Caco-2 (cell line): ENCODE measurements at regions of chr19 and their contacts with region 1.

Region 1: GRCh38 chr19:41753936-41754529 is 1.3 kb upstream of the CEACAM6 start:
- DNase-seq: peak; percentile 70 to 71
- H3K4me3 ChIP-seq: no peak overlapping the region
- H3K4me3 Mint-ChIP-seq: no peak overlapping the region
- H3K27ac Mint-ChIP-seq: no peak overlapping the region
- H3K4me1 ChIP-seq: peaks cover 17% of the 10 kb centered on the region
- H3K4me1 Mint-ChIP-seq: peaks cover 20% of the 10 kb centered on the region
- H3K27me3 ChIP-seq: no peaks in the 10 kb centered on the region
- H3K27me3 Mint-ChIP-seq: no peaks in the 10 kb centered on the region
- CTCF ChIP-seq: peak; percentile 72 to 75

Region 2: GRCh38 chr19:41641879-41642485 is 112.1 kb before region 1 on chr19:
- CTCF ChIA-PET with region 1: interaction called, 14 read pairs
- POLR2A ChIA-PET with region 1: no interaction called
- intact Hi-C with region 1: loop called (anchors 5 kb)
- DNase-seq: peak; percentile 64 to 78
- H3K4me3 ChIP-seq: no peak overlapping the region
- H3K4me3 Mint-ChIP-seq: no peak overlapping the region
- H3K27ac Mint-ChIP-seq: no peak overlapping the region
- H3K4me1 ChIP-seq: no peaks in the 10 kb centered on the region
- H3K4me1 Mint-ChIP-seq: no peaks in the 10 kb centered on the region
- H3K27me3 ChIP-seq: no peaks in the 10 kb centered on the region; the same call in 1 of the 2 replicates
- H3K27me3 Mint-ChIP-seq: peaks cover 3% of the 10 kb centered on the region
- CTCF ChIP-seq: peak; percentile 87 to 95

Region 3: GRCh38 chr19:41652250-41652649 is 101.8 kb before region 1 on chr19:
- CTCF ChIA-PET with region 1: no interaction called
- POLR2A ChIA-PET with region 1: no interaction called
- intact Hi-C with region 1: no loop called
- DNase-seq: no peak
- H3K4me3 ChIP-seq: no peak overlapping the region
- H3K4me3 Mint-ChIP-seq: no peak overlapping the region
- H3K27ac Mint-ChIP-seq: no peak overlapping the region
- H3K4me1 ChIP-seq: no peaks in the 10 kb centered on the region
- H3K4me1 Mint-ChIP-seq: peaks cover 6% of the 10 kb centered on the region
- H3K27me3 ChIP-seq: no peaks in the 10 kb centered on the region
- H3K27me3 Mint-ChIP-seq: peaks cover 11% of the 10 kb centered on the region
- CTCF ChIP-seq: no peak

Region 4: DNA sequence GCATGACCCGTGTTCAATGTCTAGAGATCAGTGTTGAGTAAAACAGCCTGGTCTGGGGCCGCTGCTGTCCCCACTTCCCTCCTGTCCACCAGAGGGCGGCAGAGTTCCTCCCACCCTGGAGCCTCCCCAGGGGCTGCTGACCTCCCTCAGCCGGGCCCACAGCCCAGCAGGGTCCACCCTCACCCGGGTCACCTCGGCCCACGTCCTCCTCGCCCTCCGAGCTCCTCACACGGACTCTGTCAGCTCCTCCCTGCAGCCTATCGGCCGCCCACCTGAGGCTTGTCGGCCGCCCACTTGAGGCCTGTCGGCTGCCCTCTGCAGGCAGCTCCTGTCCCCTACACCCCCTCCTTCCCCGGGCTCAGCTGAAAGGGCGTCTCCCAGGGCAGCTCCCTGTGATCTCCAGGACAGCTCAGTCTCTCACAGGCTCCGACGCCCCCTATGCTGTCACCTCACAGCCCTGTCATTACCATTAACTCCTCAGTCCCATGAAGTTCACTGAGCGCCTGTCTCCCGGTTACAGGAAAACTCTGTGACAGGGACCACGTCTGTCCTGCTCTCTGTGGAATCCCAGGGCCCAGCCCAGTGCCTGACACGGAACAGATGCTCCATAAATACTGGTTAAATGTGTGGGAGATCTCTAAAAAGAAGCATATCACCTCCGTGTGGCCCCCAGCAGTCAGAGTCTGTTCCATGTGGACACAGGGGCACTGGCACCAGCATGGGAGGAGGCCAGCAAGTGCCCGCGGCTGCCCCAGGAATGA is 47.1 kb before region 1 on chr19:
- CTCF ChIA-PET with region 1: interaction called, 19 read pairs
- POLR2A ChIA-PET with region 1: no interaction called
- intact Hi-C with region 1: no loop called
- DNase-seq: peak; percentile 84 to 85
- H3K4me3 ChIP-seq: peak overlapping the region; percentile 26
- H3K4me3 Mint-ChIP-seq: peak overlapping the region; percentile 66
- H3K27ac Mint-ChIP-seq: no peak overlapping the region
- H3K4me1 ChIP-seq: no peaks in the 10 kb centered on the region; the same call in 1 of the 2 replicates
- H3K4me1 Mint-ChIP-seq: peaks cover 13% of the 10 kb centered on the region
- H3K27me3 ChIP-seq: no peaks in the 10 kb centered on the region
- H3K27me3 Mint-ChIP-seq: peaks cover 5% of the 10 kb centered on the region
- CTCF ChIP-seq: peak; percentile 85 to 99

Region 5: DNA sequence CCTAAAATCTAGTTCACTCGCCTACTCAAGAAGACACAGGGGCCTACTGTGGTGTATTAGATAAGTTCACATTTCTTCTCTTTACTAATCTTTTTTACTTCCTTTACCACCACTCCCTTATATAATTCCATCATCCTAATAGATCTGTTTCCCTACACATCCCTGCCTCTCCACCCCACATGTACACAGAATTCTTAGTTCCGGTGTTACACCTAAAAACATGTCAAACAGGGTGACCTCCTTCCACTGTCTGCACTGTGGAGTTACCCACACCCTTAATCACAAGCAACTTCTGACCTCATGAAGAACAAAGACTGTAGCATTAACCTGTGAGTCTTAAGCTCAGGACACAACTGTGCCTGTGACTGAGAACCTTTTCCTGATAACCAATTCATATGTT is 26.3 kb before region 1 on chr19:
- CTCF ChIA-PET with region 1: no interaction called
- POLR2A ChIA-PET with region 1: no interaction called
- intact Hi-C with region 1: no loop called
- DNase-seq: no peak
- H3K4me3 ChIP-seq: no peak overlapping the region
- H3K4me3 Mint-ChIP-seq: no peak overlapping the region
- H3K27ac Mint-ChIP-seq: no peak overlapping the region
- H3K4me1 ChIP-seq: no peaks in the 10 kb centered on the region
- H3K4me1 Mint-ChIP-seq: peaks cover 3% of the 10 kb centered on the region
- H3K27me3 ChIP-seq: no peaks in the 10 kb centered on the region; the same call in 1 of the 2 replicates
- H3K27me3 Mint-ChIP-seq: no peaks in the 10 kb centered on the region
- CTCF ChIP-seq: no peak

Region 6: GRCh38 chr19:41775360-41775695 is 21.3 kb after region 1 on chr19:
- CTCF ChIA-PET with region 1: interaction called, 19 read pairs
- POLR2A ChIA-PET with region 1: interaction called, 5 read pairs
- intact Hi-C with region 1: no loop called
- DNase-seq: no peak
- H3K4me3 ChIP-seq: no peak overlapping the region
- H3K4me3 Mint-ChIP-seq: no peak overlapping the region
- H3K27ac Mint-ChIP-seq: peak overlapping the region; percentile 87
- H3K4me1 ChIP-seq: peaks cover 80% of the 10 kb centered on the region
- H3K4me1 Mint-ChIP-seq: peaks cover 49% of the 10 kb centered on the region
- H3K27me3 ChIP-seq: no peaks in the 10 kb centered on the region
- H3K27me3 Mint-ChIP-seq: no peaks in the 10 kb centered on the region
- CTCF ChIP-seq: no peak

Region 7: GRCh38 chr19:41785653-41786052 is 31.6 kb after region 1 on chr19:
- CTCF ChIA-PET with region 1: interaction called, 59 read pairs
- POLR2A ChIA-PET with region 1: no interaction called
- intact Hi-C with region 1: loop called (anchors 1 kb)
- DNase-seq: peak; percentile 79 to 84
- H3K4me3 ChIP-seq: no peak overlapping the region
- H3K4me3 Mint-ChIP-seq: no peak overlapping the region
- H3K27ac Mint-ChIP-seq: no peak overlapping the region
- H3K4me1 ChIP-seq: peaks cover 8% of the 10 kb centered on the region
- H3K4me1 Mint-ChIP-seq: peaks cover 18% of the 10 kb centered on the region
- H3K27me3 ChIP-seq: no peaks in the 10 kb centered on the region
- H3K27me3 Mint-ChIP-seq: no peaks in the 10 kb centered on the region
- CTCF ChIP-seq: peak; percentile 80 to 89

Region 8: GRCh38 chr19:41795031-41795461 is 41.0 kb after region 1 on chr19:
- CTCF ChIA-PET with region 1: interaction called, 23 read pairs
- POLR2A ChIA-PET with region 1: no interaction called
- intact Hi-C with region 1: no loop called
- DNase-seq: peak; percentile 68 to 71
- H3K4me3 ChIP-seq: no peak overlapping the region
- H3K4me3 Mint-ChIP-seq: no peak overlapping the region
- H3K27ac Mint-ChIP-seq: no peak overlapping the region
- H3K4me1 ChIP-seq: peaks cover 25% of the 10 kb centered on the region
- H3K4me1 Mint-ChIP-seq: peaks cover 24% of the 10 kb centered on the region
- H3K27me3 ChIP-seq: no peaks in the 10 kb centered on the region
- H3K27me3 Mint-ChIP-seq: no peaks in the 10 kb centered on the region
- CTCF ChIP-seq: peak; percentile 73 to 87

Region 9: GRCh38 chr19:41821003-41821735 is 67.1 kb after region 1 on chr19:
- CTCF ChIA-PET with region 1: interaction called, 20 read pairs
- POLR2A ChIA-PET with region 1: no interaction called
- intact Hi-C with region 1: no loop called
- DNase-seq: peak in 1 of 2 experiments; percentile 75
- H3K4me3 ChIP-seq: no peak overlapping the region
- H3K4me3 Mint-ChIP-seq: no peak overlapping the region
- H3K27ac Mint-ChIP-seq: no peak overlapping the region
- H3K4me1 ChIP-seq: no peaks in the 10 kb centered on the region
- H3K4me1 Mint-ChIP-seq: no peaks in the 10 kb centered on the region
- H3K27me3 ChIP-seq: no peaks in the 10 kb centered on the region
- H3K27me3 Mint-ChIP-seq: peaks cover 21% of the 10 kb centered on the region
- CTCF ChIP-seq: peak; percentile 66 to 81

Region 10: DNA sequence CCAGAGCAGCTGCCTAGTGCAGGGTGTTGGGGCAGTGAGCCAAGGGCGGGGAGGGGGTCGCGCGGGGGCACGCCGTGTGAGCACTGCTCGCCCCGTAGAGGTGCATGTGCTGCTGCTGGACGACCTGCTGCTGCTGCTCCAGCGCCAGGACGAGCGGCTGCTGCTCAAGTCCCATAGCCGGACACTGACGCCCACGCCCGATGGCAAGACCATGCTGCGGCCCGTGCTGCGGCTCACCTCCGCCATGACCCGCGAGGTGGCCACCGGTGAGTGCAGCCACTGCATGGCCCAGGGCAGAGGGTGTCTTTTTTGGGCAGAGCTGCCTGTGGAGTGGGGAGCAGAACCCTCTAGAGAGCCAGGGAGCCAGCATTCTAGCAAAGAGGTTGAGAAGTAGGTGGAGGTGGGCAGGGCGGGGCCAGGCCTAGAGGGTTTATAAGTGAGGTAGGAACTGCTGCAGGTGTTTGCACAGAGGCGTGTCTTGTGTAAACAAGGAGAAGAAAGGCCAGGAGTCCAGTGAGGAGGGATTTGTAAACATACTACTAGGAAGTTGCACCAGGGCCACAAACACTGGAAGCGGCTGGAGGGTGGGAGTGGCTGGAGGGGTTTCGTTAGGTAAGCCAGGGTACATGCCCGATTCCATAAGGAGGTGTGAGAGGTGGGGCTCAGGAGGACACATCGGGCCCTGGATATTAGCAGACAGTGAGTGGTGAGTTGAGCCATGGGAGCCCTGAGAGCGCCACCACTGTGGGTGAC is 150.3 kb after region 1 on chr19:
- CTCF ChIA-PET with region 1: no interaction called
- POLR2A ChIA-PET with region 1: no interaction called
- intact Hi-C with region 1: no loop called
- DNase-seq: peak; percentile 92 to 97
- H3K4me3 ChIP-seq: no peak overlapping the region
- H3K4me3 Mint-ChIP-seq: peak overlapping the region; percentile 71
- H3K27ac Mint-ChIP-seq: peak overlapping the region; percentile 98
- H3K4me1 ChIP-seq: peaks cover 26% of the 10 kb centered on the region
- H3K4me1 Mint-ChIP-seq: peaks cover 28% of the 10 kb centered on the region
- H3K27me3 ChIP-seq: no peaks in the 10 kb centered on the region
- H3K27me3 Mint-ChIP-seq: no peaks in the 10 kb centered on the region
- CTCF ChIP-seq: no peak